AG04449 (cell line): ENCODE measurements at regions of chr16 and their contacts with region 1.

Region 1: GRCh38 chr16:30941600-30942425 is 7.1 kb upstream of the ORAI3 start:
- DNase-seq: no peak
- H3K4me3 ChIP-seq: no peak overlapping the region
- CTCF ChIP-seq: peak; percentile 88

Region 2: DNA sequence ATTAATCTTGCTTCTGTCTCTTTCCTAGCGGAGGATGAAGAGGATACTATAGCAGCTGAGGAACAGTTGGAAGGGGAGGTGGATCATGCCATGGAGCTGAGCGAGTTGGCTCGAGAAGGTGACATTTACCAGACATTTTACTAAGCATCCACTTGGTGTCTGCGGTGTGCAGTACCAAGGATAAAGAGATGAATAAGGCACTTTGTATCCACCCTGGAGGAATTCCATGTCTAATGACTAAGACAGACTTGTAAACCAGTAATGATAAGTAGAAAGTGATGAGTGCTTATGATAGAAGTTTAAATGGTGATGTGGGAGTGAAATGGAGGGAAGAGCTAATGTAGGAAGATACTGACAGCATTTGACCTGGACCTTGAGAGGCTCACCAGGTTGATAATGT is 230.8 kb before region 1 on chr16:
- CTCF ChIA-PET with region 1: no interaction called
- POLR2A ChIA-PET with region 1: no interaction called
- DNase-seq: no peak
- H3K4me3 ChIP-seq: no peak overlapping the region
- CTCF ChIP-seq: no peak

Region 3: DNA sequence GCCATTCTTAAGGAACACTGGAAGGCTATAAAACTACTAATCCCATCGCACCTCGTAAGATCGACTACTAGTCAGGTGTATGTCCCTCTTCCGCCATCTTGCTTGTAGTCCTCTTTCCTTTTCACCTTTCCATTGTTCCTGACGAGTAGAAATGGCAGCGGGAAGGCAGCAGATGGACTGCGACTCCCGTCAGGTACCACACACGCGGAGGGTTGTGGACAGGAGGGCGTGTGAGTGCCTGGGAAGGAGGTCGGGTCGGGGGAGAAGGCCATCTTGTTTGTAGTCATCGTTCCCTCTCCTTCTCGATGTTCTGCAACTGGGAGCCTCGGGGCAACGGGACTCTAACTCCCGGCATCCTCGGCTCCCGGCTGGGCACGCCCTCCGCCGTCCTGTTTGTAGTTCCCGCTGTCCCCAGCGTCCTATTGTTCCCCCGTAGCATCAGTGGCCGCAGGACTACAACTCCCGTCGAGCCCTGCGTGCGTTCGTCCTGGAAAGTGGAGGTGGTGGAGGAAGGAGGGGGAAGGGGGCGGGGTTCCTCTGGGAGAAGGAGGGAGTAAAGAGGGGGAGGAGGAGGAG is 18.8 kb before region 1 on chr16:
- CTCF ChIA-PET with region 1: interaction called, 76 read pairs
- POLR2A ChIA-PET with region 1: interaction called, 3 read pairs
- DNase-seq: peak; percentile 94
- H3K4me3 ChIP-seq: peak overlapping the region; percentile 93
- CTCF ChIP-seq: no peak

Region 4: GRCh38 chr16:30931068-30931650 is 10.7 kb before region 1 on chr16:
- CTCF ChIA-PET with region 1: interaction called, 76 read pairs
- POLR2A ChIA-PET with region 1: interaction called, 3 read pairs
- DNase-seq: no peak
- H3K4me3 ChIP-seq: no peak overlapping the region
- CTCF ChIP-seq: no peak

Region 5: DNA sequence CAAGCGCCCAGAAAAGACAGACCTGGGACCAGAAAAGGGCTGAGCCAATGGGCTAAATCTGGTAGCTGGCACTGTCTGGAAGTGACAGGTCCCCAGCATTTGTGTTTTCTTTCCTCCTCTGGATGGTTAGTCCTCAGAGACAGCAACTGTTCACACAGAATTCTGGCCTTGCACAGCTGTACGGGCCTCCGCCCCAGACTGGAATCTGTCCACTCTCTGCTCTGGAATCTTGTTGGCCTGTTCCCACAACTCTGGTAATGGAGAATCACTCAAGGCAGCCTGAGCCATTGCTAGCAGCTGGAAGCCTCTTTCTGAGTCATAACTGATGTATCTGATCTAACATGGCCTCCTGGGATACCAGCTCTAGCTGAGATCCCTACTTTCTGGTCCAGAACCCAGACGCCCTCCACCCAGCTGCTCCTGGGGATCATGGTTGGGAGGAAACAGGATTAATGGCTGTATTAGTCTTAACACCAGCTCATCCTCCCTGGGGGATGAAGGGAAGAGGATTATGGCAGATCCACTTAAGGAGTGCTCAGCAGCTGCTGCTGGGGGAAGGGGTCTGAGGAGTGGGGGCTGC is 123.2 kb after region 1 on chr16:
- CTCF ChIA-PET with region 1: no interaction called
- POLR2A ChIA-PET with region 1: no interaction called
- DNase-seq: peak; percentile 82
- H3K4me3 ChIP-seq: no peak overlapping the region
- CTCF ChIP-seq: no peak